ENCODE measurements at regions of chr21 and their contacts with region 1.

Region 1: DNA sequence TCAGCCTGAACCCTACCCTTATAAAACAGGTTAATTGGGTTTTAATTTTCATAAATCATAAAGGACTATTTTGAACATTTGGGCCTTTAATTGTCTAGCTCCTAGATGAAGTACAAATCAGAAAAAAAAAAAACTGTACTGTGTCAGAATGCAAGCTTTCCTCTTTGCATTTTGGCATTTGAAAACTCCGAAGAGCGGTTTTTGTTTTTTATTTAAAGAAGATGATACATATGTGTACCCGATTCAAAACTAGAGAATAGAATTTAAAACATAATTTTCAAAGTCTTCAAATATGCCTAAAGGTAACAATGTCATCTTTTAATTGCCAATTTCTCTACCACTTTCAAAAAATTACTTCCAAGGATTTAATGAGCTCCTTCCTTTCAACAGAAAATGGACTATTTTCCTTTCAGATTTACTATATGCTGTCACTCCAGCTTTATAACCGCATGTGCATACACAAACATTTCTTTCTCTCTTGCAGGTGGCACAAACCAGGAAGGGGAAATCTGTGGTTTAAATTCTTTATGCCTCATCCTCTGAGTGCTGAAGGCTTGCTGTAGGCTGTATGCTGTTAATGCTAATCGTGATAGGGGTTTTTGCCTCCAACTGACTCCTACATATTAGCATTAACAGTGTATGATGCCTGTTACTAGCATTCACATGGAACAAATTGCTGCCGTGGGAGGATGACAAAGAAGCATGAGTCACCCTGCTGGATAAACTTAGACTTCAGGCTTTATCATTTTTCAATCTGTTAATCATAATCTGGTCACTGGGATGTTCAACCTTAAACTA is 33.7 kb downstream of the MRPL39 start:
- DNase-seq: peak; percentile 42
- H3K4me3 Mint-ChIP-seq: peak overlapping the region; percentile 83
- H3K27ac Mint-ChIP-seq: peak overlapping the region; percentile 97
- H3K4me1 Mint-ChIP-seq: peaks cover 83% of the 10 kb centered on the region
- H3K27me3 Mint-ChIP-seq: no peaks in the 10 kb centered on the region

Region 2: GRCh38 chr21:25421327-25422028 is 152.1 kb before region 1 on chr21:
- intact Hi-C with region 1: loop called (anchors 1 kb)
- DNase-seq: peak; percentile 60
- H3K4me3 Mint-ChIP-seq: peak overlapping the region; percentile 77
- H3K27ac Mint-ChIP-seq: peak overlapping the region; percentile 77
- H3K4me1 Mint-ChIP-seq: peaks cover 46% of the 10 kb centered on the region
- H3K27me3 Mint-ChIP-seq: peaks cover 2% of the 10 kb centered on the region

Region 3: DNA sequence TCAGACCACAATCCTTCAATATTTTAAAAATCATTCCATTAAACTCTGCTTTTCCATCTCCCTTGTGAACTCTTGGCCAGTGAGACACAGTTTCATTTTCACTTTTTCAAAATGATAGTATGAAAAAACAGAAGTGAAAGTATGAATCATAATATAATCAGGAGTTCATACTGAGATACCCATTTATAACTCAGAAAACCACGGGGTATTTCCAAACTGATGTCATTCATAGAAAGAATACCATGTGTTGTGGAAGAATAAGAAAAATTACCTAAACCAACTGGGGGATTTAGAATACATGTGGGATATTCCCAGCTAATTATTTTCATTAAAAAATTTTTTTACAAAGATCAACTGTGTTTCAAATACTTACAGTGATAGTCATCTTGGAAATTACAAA is 116.2 kb before region 1 on chr21:
- intact Hi-C with region 1: loop called (anchors 1 kb)
- DNase-seq: no peak
- H3K4me3 Mint-ChIP-seq: peak overlapping the region; percentile 61
- H3K27ac Mint-ChIP-seq: peak overlapping the region; percentile 88
- H3K4me1 Mint-ChIP-seq: peaks cover 71% of the 10 kb centered on the region
- H3K27me3 Mint-ChIP-seq: no peaks in the 10 kb centered on the region

Region 4: GRCh38 chr21:25487046-25487594 is 86.5 kb before region 1 on chr21:
- intact Hi-C with region 1: loop called (anchors 1 kb)
- DNase-seq: no peak
- H3K4me3 Mint-ChIP-seq: peak overlapping the region; percentile 47
- H3K27ac Mint-ChIP-seq: peak overlapping the region; percentile 85
- H3K4me1 Mint-ChIP-seq: peaks cover 60% of the 10 kb centered on the region
- H3K27me3 Mint-ChIP-seq: no peaks in the 10 kb centered on the region

Region 5: GRCh38 chr21:25509862-25510261 is 63.7 kb before region 1 on chr21:
- intact Hi-C with region 1: loop called (anchors 1 kb)
- DNase-seq: no peak
- H3K4me3 Mint-ChIP-seq: no peak overlapping the region
- H3K27ac Mint-ChIP-seq: peak overlapping the region; percentile 13
- H3K4me1 Mint-ChIP-seq: peaks cover 42% of the 10 kb centered on the region
- H3K27me3 Mint-ChIP-seq: no peaks in the 10 kb centered on the region

Region 6: GRCh38 chr21:25539606-25540005 is 34.0 kb before region 1 on chr21:
- intact Hi-C with region 1: no loop called
- DNase-seq: no peak
- H3K4me3 Mint-ChIP-seq: no peak overlapping the region
- H3K27ac Mint-ChIP-seq: no peak overlapping the region
- H3K4me1 Mint-ChIP-seq: peaks cover 7% of the 10 kb centered on the region
- H3K27me3 Mint-ChIP-seq: peaks cover 1% of the 10 kb centered on the region

Region 7: GRCh38 chr21:25589887-25590286 is 16.3 kb after region 1 on chr21:
- intact Hi-C with region 1: no loop called
- DNase-seq: no peak
- H3K4me3 Mint-ChIP-seq: no peak overlapping the region
- H3K27ac Mint-ChIP-seq: no peak overlapping the region
- H3K4me1 Mint-ChIP-seq: peaks cover 16% of the 10 kb centered on the region
- H3K27me3 Mint-ChIP-seq: no peaks in the 10 kb centered on the region

Region 8: DNA sequence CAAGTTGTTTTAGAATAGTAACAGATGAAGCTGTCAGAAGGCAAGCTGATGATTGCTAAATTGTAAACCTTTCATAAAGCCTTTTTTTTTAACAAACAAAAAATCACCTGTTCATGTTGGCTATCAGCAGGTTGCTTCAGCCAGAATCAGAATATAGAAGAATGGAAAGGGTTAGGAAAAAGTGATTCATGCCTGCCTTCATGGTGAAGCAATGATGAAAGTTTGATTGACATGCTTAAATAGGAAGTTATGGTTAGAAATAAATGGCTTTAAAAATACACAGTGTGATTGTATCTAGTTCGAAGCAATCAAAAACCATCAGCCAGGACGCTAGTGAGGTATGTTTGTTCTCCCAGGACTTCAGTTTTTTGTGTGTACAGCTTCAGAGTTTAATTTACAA is 199.1 kb after region 1 on chr21:
- intact Hi-C with region 1: no loop called
- DNase-seq: no peak
- H3K4me3 Mint-ChIP-seq: no peak overlapping the region
- H3K27ac Mint-ChIP-seq: peak overlapping the region; percentile 23
- H3K4me1 Mint-ChIP-seq: peaks cover 5% of the 10 kb centered on the region
- H3K27me3 Mint-ChIP-seq: no peaks in the 10 kb centered on the region

Region 9: DNA sequence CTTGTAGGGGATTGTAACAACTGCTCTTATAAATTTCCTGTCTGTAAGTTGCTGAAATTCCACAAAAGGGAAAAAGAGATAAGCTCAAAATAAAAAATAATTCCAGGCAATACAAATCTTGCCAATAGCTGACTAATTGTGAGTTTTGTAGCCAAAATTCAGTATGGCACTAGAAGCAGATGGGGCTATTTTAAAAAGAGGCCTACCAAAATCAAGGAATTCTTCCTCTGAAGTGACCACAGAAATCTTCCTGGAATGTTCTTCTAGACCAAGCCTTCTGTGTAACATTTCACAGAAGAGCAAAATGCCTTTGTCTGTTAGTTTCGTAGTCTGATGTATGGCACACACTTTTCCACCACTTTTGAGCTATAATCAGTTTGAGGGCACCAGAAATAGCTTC is 871.8 kb after region 1 on chr21:
- intact Hi-C with region 1: no loop called
- DNase-seq: no peak
- H3K4me3 Mint-ChIP-seq: no peak overlapping the region
- H3K27ac Mint-ChIP-seq: no peak overlapping the region
- H3K4me1 Mint-ChIP-seq: no peaks in the 10 kb centered on the region
- H3K27me3 Mint-ChIP-seq: no peaks in the 10 kb centered on the region

Measured in activated T-helper 1 cell treated with anti-CD3 and anti-CD28 coated beads, Interleukin-12 subunit alpha, Interleukin-12 subunit beta, Interleukin-2, Interleukin-4 antibody, amounts not matched to agents 30 ng/mL and 10 ng/mL and 1 ng/mL, durations not matched to agents 14 hours and 24 hours and 36 hours (primary cell).